ENCODE measurements at regions of chrX and their contacts with region 1.

Region 1: DNA sequence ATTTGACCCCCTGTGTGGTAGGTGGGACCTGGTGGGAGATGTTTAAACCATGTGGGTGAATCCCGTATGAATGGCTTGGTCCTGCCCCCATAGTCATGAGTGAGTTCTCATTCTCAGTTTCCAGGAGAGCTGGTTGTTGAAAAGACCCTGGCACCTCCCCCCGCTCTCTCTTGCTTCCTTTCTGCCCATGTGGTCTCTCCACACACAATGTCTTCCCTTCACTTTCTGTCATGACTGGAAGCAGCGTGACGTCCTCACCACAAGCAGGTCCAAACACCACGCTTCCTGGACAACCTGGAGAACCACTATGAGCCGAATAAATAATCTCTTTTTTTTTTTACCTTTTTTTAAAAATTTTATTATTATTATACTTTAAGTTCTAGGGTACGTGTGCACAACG is 3.5 kb upstream of the CSF2RA start:
- DNase-seq: no peak
- H3K4me3 ChIP-seq: no peak overlapping the region
- H3K27ac ChIP-seq: no peak overlapping the region
- H3K4me1 ChIP-seq: no peaks in the 10 kb centered on the region
- H3K27me3 ChIP-seq: no peaks in the 10 kb centered on the region
- CTCF ChIP-seq: no peak
- POLR2A ChIP-seq: no peak

Region 2: GRCh38 chrX:2348211-2348610 is 1083.1 kb after region 1 on chrX:
- CTCF ChIA-PET with region 1: no interaction called
- POLR2A ChIA-PET with region 1: no interaction called
- dilution Hi-C with region 1: no loop called
- intact Hi-C with region 1: loop called (anchors 5 kb)
- DNase-seq: no peak
- H3K4me3 ChIP-seq: no peak overlapping the region
- H3K27ac ChIP-seq: no peak overlapping the region
- H3K4me1 ChIP-seq: peaks cover 11% of the 10 kb centered on the region
- H3K27me3 ChIP-seq: no peaks in the 10 kb centered on the region
- CTCF ChIP-seq: no peak
- POLR2A ChIP-seq: no peak